Gastrocnemius medialis (tissue), 4 donors: ENCODE measurements at regions of chr3 and their contacts with region 1.

Region 1: GRCh38 chr3:195956571-195956970 is 48.2 kb upstream of the TNK2 start:
- DNase-seq: no peak
- ATAC-seq: no peak
- H3K4me3 ChIP-seq: no peak overlapping the region
- H3K27ac ChIP-seq: no peak overlapping the region
- H3K4me1 ChIP-seq: no peaks in the 10 kb centered on the region
- H3K27me3 ChIP-seq: no peaks in the 10 kb centered on the region
- CTCF ChIP-seq: no peak
- POLR2A ChIP-seq: no peak

Region 2: DNA sequence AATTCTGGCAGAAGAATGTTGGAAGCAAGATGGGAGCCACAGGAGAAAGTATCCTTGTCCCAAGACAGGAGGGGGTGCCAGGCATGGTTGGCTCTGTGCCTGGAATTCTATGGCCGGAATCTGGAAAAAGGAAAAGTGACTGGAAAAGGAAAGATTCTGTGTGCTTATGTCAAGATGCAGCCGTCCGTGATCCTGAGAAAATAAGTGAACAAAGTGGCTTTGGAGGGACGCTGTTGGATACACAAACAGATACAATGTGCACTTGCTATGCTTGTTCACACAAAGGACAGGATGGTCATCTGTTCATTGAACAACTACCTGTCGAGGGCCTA is 264.3 kb before region 1 on chr3:
- in situ Hi-C with region 1: loop called in 1 of 4 experiments (anchors 25 kb)
- intact Hi-C with region 1: loop called (anchors 10 kb)
- DNase-seq: no peak
- ATAC-seq: no peak
- H3K4me3 ChIP-seq: no peak overlapping the region
- H3K27ac ChIP-seq: peak overlapping the region; percentile 0 to 66 (median 32)
- H3K4me1 ChIP-seq: peaks cover 10 to 12% of the 10 kb centered on the region in 2 donors
- H3K27me3 ChIP-seq: no peaks in the 10 kb centered on the region
- CTCF ChIP-seq: no peak
- POLR2A ChIP-seq: no peak

Region 3: GRCh38 chr3:195697582-195698301 is 258.8 kb before region 1 on chr3:
- in situ Hi-C with region 1: loop called in 1 of 4 experiments (anchors 25 kb)
- intact Hi-C with region 1: no loop called
- DNase-seq: no peak
- ATAC-seq: peak in 1 of 2 donors; percentile 67
- H3K4me3 ChIP-seq: no peak overlapping the region
- H3K27ac ChIP-seq: peak overlapping the region in 2 of 4 donors; percentile 15 to 58
- H3K4me1 ChIP-seq: peaks cover 0 to 10% of the 10 kb centered on the region in 2 donors
- H3K27me3 ChIP-seq: no peaks in the 10 kb centered on the region
- CTCF ChIP-seq: no peak
- POLR2A ChIP-seq: no peak